Spleen (tissue), 13 donors: ENCODE measurements at regions of chr11 and their contacts with region 1.

Region 1: GRCh38 chr11:14907411-14908213 is 15.6 kb upstream of the CYP2R1 start:
- DNase-seq: peak; percentile 96
- H3K4me3 ChIP-seq: no peak overlapping the region
- H3K27ac ChIP-seq: peak overlapping the region in 1 of 8 donors; percentile 26
- H3K4me1 ChIP-seq: peaks cover 8 to 47% (median 32%) of the 10 kb centered on the region in 6 donors
- H3K27me3 ChIP-seq: no peaks in the 10 kb centered on the region
- CTCF ChIP-seq: peak; percentile 59 to 90 (median 77)
- POLR2A ChIP-seq: no peak

Region 2: DNA sequence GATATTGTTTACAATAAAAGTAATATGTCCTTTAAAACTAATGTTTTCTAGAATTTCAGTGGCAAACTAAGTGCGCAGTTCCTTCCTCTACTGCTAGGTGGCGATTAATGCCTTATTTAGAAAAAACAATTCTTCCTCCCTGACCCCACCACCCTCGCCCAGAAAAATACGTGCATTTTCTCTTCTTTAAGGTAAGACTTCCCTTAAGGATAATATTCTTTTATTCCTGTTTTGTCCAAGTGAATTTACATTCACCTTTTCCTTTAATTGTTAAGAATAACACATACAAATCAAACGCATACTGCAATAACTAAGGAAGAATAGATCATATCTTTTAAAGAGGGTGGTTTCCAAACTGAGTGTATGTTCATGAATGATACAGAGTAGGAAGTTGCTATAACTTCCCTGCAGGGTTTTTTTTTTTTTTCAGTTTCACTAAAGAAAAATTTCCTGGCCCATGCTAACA is 370.4 kb before region 1 on chr11:
- intact Hi-C with region 1: loop called (anchors 5 kb)
- DNase-seq: no peak
- H3K4me3 ChIP-seq: peak overlapping the region in 2 of 8 donors; percentile 11 to 48
- H3K27ac ChIP-seq: peak overlapping the region in 6 of 8 donors; percentile 14 to 72 (median 52)
- H3K4me1 ChIP-seq: peaks cover 6 to 53% (median 32%) of the 10 kb centered on the region in 6 donors
- H3K27me3 ChIP-seq: no peaks in the 10 kb centered on the region
- CTCF ChIP-seq: peak; percentile 57 to 87 (median 80)
- POLR2A ChIP-seq: no peak

Region 3: DNA sequence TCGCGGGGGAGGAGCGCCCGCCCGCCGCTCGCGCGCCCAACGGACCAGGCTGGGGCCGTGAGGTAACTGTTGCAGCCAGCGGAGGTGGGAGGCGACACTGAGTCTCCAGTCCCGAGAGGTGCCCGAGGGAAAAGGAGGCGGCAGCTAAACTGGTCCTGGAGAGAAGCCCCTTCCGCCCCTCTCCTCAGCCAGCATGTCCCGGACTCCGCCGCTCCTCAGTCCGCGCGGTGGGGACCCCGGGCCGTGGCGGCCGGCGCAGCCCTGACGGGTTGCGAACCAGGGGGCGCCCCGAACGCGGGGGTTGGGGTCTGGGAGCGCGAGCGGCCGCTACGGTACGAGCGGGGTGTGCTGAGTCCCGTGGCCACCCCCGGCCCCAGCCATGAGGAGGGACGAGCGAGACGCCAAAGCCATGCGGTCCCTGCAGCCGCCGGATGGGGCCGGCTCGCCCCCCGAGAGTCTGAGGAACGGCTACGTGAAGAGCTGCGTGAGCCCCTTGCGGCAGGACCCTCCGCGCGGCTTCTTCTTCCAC is 263.9 kb before region 1 on chr11 and contains the start of gene PDE3B:
- intact Hi-C with region 1: loop called (anchors 10 kb)
- DNase-seq: peak; percentile 95
- H3K4me3 ChIP-seq: peak within 1 kb of the TSS; percentile 53 to 90 (median 76)
- H3K27ac ChIP-seq: peak within 1 kb of the TSS; percentile 85 to 96 (median 94)
- H3K4me1 ChIP-seq: peaks cover 9 to 73% (median 29%) of the 10 kb centered on the region in 6 donors
- H3K27me3 ChIP-seq: peaks cover 0 to 55% (median 22%) of the 10 kb centered on the region in 7 donors
- CTCF ChIP-seq: peak in 1 of 11 experiments; percentile 20
- POLR2A ChIP-seq: peak; percentile 2 to 81 (median 33)
- total RNA-seq, gene PDE3B: 19.8 to 78.7 (median 40.0) TPM

Region 4: DNA sequence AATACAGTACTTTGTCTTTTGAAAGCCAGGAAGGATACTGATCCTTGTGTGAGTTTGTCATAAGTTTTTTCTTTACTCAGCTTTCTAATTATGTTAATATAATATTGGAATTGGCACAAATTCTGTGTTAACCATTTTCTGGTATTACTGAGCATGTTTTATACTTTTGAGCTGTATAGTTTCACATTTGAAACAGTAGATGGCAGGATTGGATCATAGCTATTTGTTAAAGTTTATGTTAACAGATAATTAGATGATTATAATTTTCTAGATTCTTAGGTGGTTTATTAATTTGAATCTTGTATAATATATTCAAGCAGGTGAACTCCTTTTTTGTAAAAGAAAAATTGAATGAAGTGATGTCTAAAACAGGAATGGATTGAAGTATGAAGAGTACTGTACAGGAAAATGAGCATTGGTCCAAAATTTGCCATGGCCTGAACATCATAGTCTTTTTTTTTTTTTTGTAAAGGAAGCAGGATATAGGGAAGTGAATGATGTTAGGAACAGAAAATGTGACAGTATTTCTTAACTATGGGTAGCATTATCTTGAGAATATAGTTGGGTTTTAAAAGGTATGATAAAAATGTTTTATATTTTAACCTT is 117.6 kb before region 1 on chr11:
- intact Hi-C with region 1: loop called (anchors 5 kb)
- DNase-seq: no peak
- H3K4me3 ChIP-seq: no peak overlapping the region
- H3K27ac ChIP-seq: no peak overlapping the region
- H3K4me1 ChIP-seq: peaks cover 0 to 2% (median under 1%) of the 10 kb centered on the region in 6 donors
- H3K27me3 ChIP-seq: no peaks in the 10 kb centered on the region
- CTCF ChIP-seq: peak in 7 of 11 experiments; percentile 19 to 64 (median 40)
- POLR2A ChIP-seq: no peak

Region 5: GRCh38 chr11:15074206-15075161 is 166.9 kb after region 1 on chr11:
- intact Hi-C with region 1: loop called (anchors 5 kb)
- DNase-seq: peak; percentile 93
- H3K4me3 ChIP-seq: peak overlapping the region; percentile 14 to 60 (median 31)
- H3K27ac ChIP-seq: no peak overlapping the region
- H3K4me1 ChIP-seq: peaks cover 9 to 23% (median 19%) of the 10 kb centered on the region in 6 donors
- H3K27me3 ChIP-seq: peaks cover 2 to 55% (median 32%) of the 10 kb centered on the region in 7 donors
- CTCF ChIP-seq: peak; percentile 34 to 84 (median 66)
- POLR2A ChIP-seq: no peak